Dorsolateral prefrontal cortex (tissue), 120 donors: ENCODE measurements at regions of chr9 and their contacts with region 1.

Region 1: DNA sequence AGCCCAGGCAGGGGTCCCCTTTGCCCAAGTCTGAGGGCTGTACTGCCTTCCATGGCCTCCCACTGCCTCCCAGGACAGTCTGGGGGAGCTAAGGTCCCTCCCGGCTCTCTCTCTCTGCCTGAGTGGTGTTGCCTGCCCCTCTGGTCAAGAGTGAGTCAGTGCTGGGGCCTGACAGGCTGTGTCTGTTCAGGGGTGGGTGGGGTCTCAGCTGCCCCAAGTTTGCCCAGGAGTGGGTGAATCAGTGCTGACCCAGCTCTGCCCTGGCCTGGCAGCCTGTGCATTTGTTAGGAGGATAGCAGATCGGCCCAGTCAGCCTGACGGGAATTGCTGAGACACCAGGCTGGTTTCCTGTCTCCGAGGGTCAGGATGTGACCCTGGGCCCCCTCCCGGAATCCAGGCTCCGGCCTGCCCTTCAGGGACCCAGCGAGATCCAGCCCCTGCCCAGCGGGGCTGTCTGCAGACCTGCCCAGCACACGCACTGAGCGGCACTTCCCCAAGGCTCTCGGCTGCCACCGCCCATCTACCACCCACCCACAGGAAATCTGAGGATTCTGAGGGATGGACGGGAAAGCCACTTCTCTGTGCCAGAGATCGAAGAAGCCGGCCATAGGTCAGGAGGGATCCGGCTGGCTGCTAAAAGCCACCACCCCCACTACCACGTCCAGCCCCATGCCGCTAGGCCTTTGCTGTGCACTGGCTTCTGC is 15.9 kb downstream of the ENG start:
- DNase-seq: peak in 1 of 10 donors; percentile 37
- H3K4me3 ChIP-seq: no peak overlapping the region
- H3K27ac ChIP-seq: peak overlapping the region in 34 of 59 donors; percentile 11 to 86 (median 58)
- H3K27me3 ChIP-seq: no peaks in the 10 kb centered on the region
- CTCF ChIP-seq: no peak

Region 2: DNA sequence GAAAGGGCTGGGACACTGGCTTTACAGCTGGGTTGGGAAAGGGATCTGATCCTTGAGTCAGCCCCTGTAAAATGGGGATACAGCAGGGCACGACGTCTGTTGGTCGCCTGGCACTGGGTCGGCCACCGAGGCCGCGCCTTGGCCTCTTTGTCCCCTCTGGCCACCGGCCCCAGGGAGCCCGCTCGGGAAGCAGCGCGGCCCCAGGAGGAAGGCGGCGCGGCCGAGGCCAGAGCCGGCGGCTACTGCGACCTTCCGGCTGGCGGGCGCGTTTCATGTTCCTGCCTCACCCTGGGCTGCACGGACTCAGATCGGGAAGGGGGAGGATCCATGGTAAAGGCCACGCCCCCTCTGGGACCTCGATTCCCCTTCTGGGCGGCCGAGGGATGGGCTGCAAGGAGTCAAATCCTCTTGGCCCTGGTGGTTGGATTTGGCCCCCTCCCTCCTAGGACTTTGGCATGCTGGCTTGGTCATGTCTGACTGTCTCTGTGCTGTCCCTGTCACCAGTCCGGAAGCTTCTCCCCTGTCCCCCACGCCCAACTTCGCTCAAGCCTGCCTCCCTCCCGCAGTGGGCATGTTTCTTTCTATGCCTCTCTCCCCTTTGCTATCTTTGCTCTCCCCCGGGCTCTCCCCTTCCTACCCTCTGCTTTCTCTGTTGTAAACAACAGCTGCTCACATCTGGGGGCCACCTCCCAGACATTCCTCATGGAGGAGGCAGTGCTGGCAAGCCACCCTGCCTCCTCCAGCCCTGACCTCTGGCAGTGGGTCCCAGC is 10.1 kb before region 1 on chr9:
- intact Hi-C with region 1: loop called in 1 of 2 experiments (anchors 1 kb)
- DNase-seq: peak in 5 of 10 donors; percentile 42 to 64 (median 57)
- H3K4me3 ChIP-seq: peak overlapping the region in 56 of 59 donors; percentile 0 to 61 (median 42)
- H3K27ac ChIP-seq: peak overlapping the region in 38 of 59 donors; percentile 2 to 75 (median 50)
- H3K27me3 ChIP-seq: peaks cover 0 to 4% (median 0%) of the 10 kb centered on the region in 45 donors
- CTCF ChIP-seq: peak in 5 of 56 donors; percentile 6 to 20 (median 14)

Region 3: GRCh38 chr9:128275996-128276573 is 437.6 kb after region 1 on chr9 and contains the starts of genes GOLGA2 and SWI5:
- intact Hi-C with region 1: no loop called
- DNase-seq: peak; percentile 98 to 99 (median 99)
- H3K4me3 ChIP-seq: peak within 1 kb of the TSS; percentile 63 to 98 (median 88)
- H3K27ac ChIP-seq: peak within 1 kb of the TSS in 58 of 59 donors; percentile 37 to 93 (median 80)
- H3K27me3 ChIP-seq: no peaks in the 10 kb centered on the region
- CTCF ChIP-seq: peak in 16 of 56 donors; percentile 8 to 46 (median 28)
- total RNA-seq, gene GOLGA2: 59.2 to 145 (median 94.1) TPM
- total RNA-seq, gene SWI5: 11.3 to 29.4 (median 16.7) TPM